ENCODE measurements at regions of chr6 and their contacts with region 1.

Region 1: GRCh38 chr6:130885392-130886192 is 58.4 kb downstream of the SMLR1 start:
- DNase-seq: peak; percentile 57
- H3K4me3 ChIP-seq: no peak overlapping the region
- H3K27ac ChIP-seq: no peak overlapping the region
- H3K4me1 ChIP-seq: no peaks in the 10 kb centered on the region
- H3K27me3 ChIP-seq: no peaks in the 10 kb centered on the region
- CTCF ChIP-seq: peak; percentile 80 to 89

Region 2: GRCh38 chr6:130526466-130526865 is 359.1 kb before region 1 on chr6:
- CTCF ChIA-PET with region 1: no interaction called
- dilution Hi-C with region 1: no loop called
- in situ Hi-C with region 1: no loop called
- intact Hi-C with region 1: no loop called
- DNase-seq: no peak
- H3K4me3 ChIP-seq: no peak overlapping the region
- H3K27ac ChIP-seq: no peak overlapping the region
- H3K4me1 ChIP-seq: peaks cover 5% of the 10 kb centered on the region
- H3K27me3 ChIP-seq: no peaks in the 10 kb centered on the region
- CTCF ChIP-seq: no peak

Region 3: DNA sequence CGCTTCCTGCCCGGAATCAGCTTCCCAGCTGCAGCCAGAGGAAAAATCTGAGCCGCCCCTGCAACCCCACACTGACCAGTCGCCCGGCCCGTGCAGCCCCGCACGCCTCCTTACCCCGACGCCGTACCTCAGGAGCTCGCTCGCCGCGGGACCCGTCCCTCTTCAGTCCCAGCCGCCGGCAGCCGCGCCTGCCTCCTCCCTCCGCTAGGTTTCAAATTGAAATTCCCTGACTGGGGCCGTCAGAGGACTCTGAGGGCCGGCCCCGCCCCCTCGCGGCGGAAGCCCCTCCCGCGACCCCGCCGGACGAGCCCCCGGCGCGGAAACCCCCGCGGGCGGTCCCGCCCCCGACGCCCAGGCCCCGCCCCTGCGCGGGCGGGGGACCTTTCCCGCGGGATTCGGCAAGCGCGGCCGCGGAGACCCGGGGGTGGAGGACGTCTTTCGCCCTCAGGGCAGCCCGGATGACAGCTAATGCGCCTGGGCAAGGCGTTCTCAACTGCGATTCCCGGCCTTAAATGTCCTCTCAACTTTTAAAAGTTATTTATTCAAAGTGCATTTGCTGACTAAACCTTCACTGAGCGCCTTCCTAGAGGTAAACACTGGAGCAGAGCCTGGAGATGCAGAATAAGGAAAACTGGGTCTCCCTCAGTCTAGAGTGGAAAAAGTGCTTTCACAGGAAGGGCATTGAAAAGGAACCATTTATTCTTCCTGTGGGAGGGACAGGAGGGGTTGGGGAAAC is 177.6 kb after region 1 on chr6 and contains the start of gene EPB41L2:
- CTCF ChIA-PET with region 1: no interaction called
- dilution Hi-C with region 1: no loop called
- in situ Hi-C with region 1: no loop called
- intact Hi-C with region 1: loop called (anchors 5 kb)
- DNase-seq: peak; percentile 80
- H3K4me3 ChIP-seq: peak within 1 kb of the TSS; percentile 81 to 90 (median 89)
- H3K27ac ChIP-seq: peak within 1 kb of the TSS; percentile 52
- H3K4me1 ChIP-seq: peaks cover 30% of the 10 kb centered on the region
- H3K27me3 ChIP-seq: no peaks in the 10 kb centered on the region
- CTCF ChIP-seq: peak in 1 of 2 donors; percentile 7
- total RNA-seq, gene EPB41L2: 6.8 to 52.2 TPM

Region 4: GRCh38 chr6:131116749-131117360 is 231.3 kb after region 1 on chr6:
- CTCF ChIA-PET with region 1: interaction called, 4 read pairs
- dilution Hi-C with region 1: no loop called
- in situ Hi-C with region 1: loop called (anchors 5 kb)
- intact Hi-C with region 1: loop called (anchors 1 kb)
- DNase-seq: peak; percentile 37
- H3K4me3 ChIP-seq: no peak overlapping the region
- H3K27ac ChIP-seq: no peak overlapping the region
- H3K4me1 ChIP-seq: no peaks in the 10 kb centered on the region
- H3K27me3 ChIP-seq: no peaks in the 10 kb centered on the region
- CTCF ChIP-seq: peak; percentile 42 to 53

Region 5: GRCh38 chr6:131167773-131168172 is 282.2 kb after region 1 on chr6:
- CTCF ChIA-PET with region 1: no interaction called
- dilution Hi-C with region 1: no loop called
- in situ Hi-C with region 1: no loop called
- intact Hi-C with region 1: loop called (anchors 2 kb)
- DNase-seq: no peak
- H3K4me3 ChIP-seq: no peak overlapping the region
- H3K27ac ChIP-seq: no peak overlapping the region
- H3K4me1 ChIP-seq: peaks cover 4% of the 10 kb centered on the region
- H3K27me3 ChIP-seq: no peaks in the 10 kb centered on the region
- CTCF ChIP-seq: no peak

Region 6: GRCh38 chr6:131519670-131520436 is 634.3 kb after region 1 on chr6:
- CTCF ChIA-PET with region 1: no interaction called
- dilution Hi-C with region 1: no loop called
- in situ Hi-C with region 1: loop called (anchors 10 kb)
- intact Hi-C with region 1: no loop called
- DNase-seq: peak; percentile 29
- H3K4me3 ChIP-seq: no peak overlapping the region
- H3K27ac ChIP-seq: no peak overlapping the region
- H3K4me1 ChIP-seq: no peaks in the 10 kb centered on the region
- H3K27me3 ChIP-seq: peaks cover 2% of the 10 kb centered on the region
- CTCF ChIP-seq: peak; percentile 45 to 72

Region 7: DNA sequence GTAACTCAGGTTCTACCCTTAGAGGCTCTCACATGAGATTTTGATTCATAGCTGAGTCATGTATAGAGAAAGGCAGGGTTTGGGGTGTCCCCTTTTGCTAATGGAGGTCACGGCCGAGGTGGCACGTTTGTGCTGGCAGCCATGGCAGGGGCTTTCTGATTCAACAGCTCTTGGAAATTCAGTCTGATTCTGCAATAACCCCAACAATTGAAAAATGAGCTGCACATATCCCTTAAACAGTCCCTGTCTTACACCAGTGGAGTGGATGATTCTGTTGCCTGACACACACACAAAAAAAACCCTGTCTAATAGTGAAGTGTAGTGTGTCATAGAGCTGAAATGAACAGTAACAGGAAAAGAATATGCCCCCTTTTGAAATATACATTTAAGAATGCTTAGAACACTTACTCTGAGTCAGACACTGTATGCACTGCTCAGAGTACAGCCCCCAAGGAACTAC is 647.0 kb after region 1 on chr6:
- CTCF ChIA-PET with region 1: interaction called, 14 read pairs
- dilution Hi-C with region 1: no loop called
- in situ Hi-C with region 1: loop called (anchors 10 kb)
- intact Hi-C with region 1: loop called (anchors 1 kb)
- DNase-seq: peak; percentile 37
- H3K4me3 ChIP-seq: no peak overlapping the region
- H3K27ac ChIP-seq: no peak overlapping the region
- H3K4me1 ChIP-seq: no peaks in the 10 kb centered on the region
- H3K27me3 ChIP-seq: no peaks in the 10 kb centered on the region
- CTCF ChIP-seq: no peak